Activated naive CD4-positive, alpha-beta T cell treated with anti-CD3 and anti-CD28 coated beads for 36 hours (primary cell): ENCODE measurements at regions of chr4 and their contacts with region 1.

Region 1: DNA sequence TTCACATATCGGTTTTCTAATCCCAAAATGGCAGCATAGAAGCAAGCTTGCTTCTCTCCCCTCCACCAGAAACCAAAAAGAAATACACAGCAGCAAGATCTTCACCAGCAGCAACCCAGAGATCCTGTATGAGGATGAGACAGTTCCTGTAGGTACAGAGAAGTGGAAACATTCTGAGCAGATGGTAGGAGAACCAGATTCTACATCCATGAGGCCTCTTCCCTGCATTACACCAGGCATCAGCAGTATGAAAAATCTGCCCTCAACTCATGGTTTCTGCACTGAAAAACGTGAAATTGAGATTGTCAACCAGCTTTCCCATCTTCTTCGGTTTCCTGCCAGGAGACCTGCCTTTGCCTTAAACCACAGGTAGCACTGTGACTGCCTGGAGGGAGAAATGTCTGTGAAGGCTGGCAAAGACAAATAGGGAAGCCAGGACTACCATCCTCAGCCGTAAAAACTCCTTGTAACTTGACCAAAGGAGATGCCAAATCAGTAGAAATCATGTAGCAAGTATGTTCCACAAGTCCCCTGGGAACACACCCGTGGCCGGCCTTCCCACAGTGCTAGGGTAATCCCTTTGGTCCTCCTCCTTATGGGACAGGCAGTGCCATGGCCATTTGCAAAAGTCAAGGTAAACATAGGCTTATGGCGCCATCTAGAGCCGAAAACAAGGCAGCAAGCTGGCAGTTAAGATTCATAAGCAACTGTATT is 24.0 kb upstream of the MTHFD2L start:
- DNase-seq: peak; percentile 78
- H3K4me3 Mint-ChIP-seq: no peak overlapping the region
- H3K27ac Mint-ChIP-seq: no peak overlapping the region
- H3K4me1 Mint-ChIP-seq: no peaks in the 10 kb centered on the region
- H3K27me3 Mint-ChIP-seq: peaks cover 7% of the 10 kb centered on the region

Region 2: DNA sequence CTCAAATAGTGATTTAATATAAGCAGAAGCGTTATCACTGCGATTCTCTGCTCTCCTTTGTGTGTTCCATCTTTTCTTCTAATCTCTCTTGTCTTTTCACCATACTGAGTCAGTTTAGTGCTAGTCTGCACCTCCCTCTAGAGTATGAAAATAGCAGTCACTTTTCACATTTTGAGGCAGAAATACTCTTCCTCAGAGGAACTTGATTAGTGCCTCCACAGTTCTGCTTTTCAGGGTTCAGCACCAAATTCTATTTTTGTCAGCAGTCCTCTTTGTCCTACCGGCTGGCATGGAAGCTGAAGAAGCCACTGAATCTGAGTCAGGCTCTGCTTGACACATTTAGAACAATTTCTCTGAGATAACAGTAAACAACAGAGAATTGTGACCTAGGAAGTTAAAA is 825.7 kb before region 1 on chr4:
- CTCF ChIA-PET with region 1: no interaction called
- intact Hi-C with region 1: loop called (anchors 2 kb)
- DNase-seq: no peak
- H3K4me3 Mint-ChIP-seq: no peak overlapping the region
- H3K27ac Mint-ChIP-seq: no peak overlapping the region
- H3K4me1 Mint-ChIP-seq: no peaks in the 10 kb centered on the region
- H3K27me3 Mint-ChIP-seq: no peaks in the 10 kb centered on the region

Region 3: GRCh38 chr4:73573794-73574406 is 560.0 kb before region 1 on chr4:
- CTCF ChIA-PET with region 1: no interaction called
- intact Hi-C with region 1: loop called (anchors 5 kb)
- DNase-seq: peak; percentile 45
- H3K4me3 Mint-ChIP-seq: no peak overlapping the region
- H3K27ac Mint-ChIP-seq: no peak overlapping the region
- H3K4me1 Mint-ChIP-seq: no peaks in the 10 kb centered on the region
- H3K27me3 Mint-ChIP-seq: peaks cover 6% of the 10 kb centered on the region

Region 4: GRCh38 chr4:73593631-73594241 is 540.2 kb before region 1 on chr4:
- CTCF ChIA-PET with region 1: no interaction called
- intact Hi-C with region 1: loop called (anchors 2 kb)
- DNase-seq: no peak
- H3K4me3 Mint-ChIP-seq: no peak overlapping the region
- H3K27ac Mint-ChIP-seq: no peak overlapping the region
- H3K4me1 Mint-ChIP-seq: no peaks in the 10 kb centered on the region
- H3K27me3 Mint-ChIP-seq: no peaks in the 10 kb centered on the region

Region 5: GRCh38 chr4:73662709-73663546 is 471.0 kb before region 1 on chr4:
- CTCF ChIA-PET with region 1: interaction called, 10 read pairs
- intact Hi-C with region 1: loop called (anchors 1 kb)
- DNase-seq: no peak
- H3K4me3 Mint-ChIP-seq: no peak overlapping the region
- H3K27ac Mint-ChIP-seq: no peak overlapping the region
- H3K4me1 Mint-ChIP-seq: no peaks in the 10 kb centered on the region
- H3K27me3 Mint-ChIP-seq: no peaks in the 10 kb centered on the region

Region 6: GRCh38 chr4:73729534-73730165 is 404.3 kb before region 1 on chr4:
- CTCF ChIA-PET with region 1: interaction called, 3 read pairs
- intact Hi-C with region 1: loop called (anchors 5 kb)
- DNase-seq: peak; percentile 16
- H3K4me3 Mint-ChIP-seq: no peak overlapping the region
- H3K27ac Mint-ChIP-seq: no peak overlapping the region
- H3K4me1 Mint-ChIP-seq: no peaks in the 10 kb centered on the region
- H3K27me3 Mint-ChIP-seq: peaks cover 10% of the 10 kb centered on the region

Region 7: GRCh38 chr4:74738470-74739140 is 604.7 kb after region 1 on chr4:
- CTCF ChIA-PET with region 1: no interaction called
- intact Hi-C with region 1: no loop called
- DNase-seq: no peak
- H3K4me3 Mint-ChIP-seq: no peak overlapping the region
- H3K27ac Mint-ChIP-seq: no peak overlapping the region
- H3K4me1 Mint-ChIP-seq: no peaks in the 10 kb centered on the region
- H3K27me3 Mint-ChIP-seq: no peaks in the 10 kb centered on the region